HEK293T (cell line): ENCODE measurements at regions of chr17 and their contacts with region 1.

Region 1: GRCh38 chr17:81428948-81429774 is 33.9 kb downstream of the BAHCC1 start:
- DNase-seq: no peak

Region 2: GRCh38 chr17:81365148-81365600 is 64.0 kb before region 1 on chr17:
- CTCF ChIA-PET with region 1: no interaction called
- POLR2A ChIA-PET with region 1: no interaction called
- DNase-seq: no peak

Region 3: DNA sequence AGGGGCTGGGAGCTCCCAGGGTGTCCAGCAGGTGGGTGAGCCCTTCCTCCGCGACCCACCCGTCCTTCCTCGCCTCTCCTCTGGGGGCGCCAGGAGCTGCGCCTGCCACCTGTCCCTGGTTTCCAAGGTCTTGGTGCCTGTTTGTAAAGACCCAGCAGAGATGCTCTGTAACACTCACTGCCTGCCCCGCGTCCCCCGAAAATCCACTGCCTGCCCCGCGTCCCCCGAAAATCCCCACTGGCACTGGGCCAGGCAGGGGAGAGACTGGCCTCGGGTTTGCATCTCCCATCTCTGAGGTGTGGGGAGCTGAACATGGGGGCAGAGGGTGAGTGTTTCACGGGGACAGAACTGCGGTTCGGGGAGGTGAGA is 11.7 kb after region 1 on chr17:
- CTCF ChIA-PET with region 1: interaction called, 19 read pairs
- POLR2A ChIA-PET with region 1: no interaction called
- DNase-seq: peak; percentile 88